ENCODE measurements at regions of chr7 and their contacts with region 1.

Region 1: DNA sequence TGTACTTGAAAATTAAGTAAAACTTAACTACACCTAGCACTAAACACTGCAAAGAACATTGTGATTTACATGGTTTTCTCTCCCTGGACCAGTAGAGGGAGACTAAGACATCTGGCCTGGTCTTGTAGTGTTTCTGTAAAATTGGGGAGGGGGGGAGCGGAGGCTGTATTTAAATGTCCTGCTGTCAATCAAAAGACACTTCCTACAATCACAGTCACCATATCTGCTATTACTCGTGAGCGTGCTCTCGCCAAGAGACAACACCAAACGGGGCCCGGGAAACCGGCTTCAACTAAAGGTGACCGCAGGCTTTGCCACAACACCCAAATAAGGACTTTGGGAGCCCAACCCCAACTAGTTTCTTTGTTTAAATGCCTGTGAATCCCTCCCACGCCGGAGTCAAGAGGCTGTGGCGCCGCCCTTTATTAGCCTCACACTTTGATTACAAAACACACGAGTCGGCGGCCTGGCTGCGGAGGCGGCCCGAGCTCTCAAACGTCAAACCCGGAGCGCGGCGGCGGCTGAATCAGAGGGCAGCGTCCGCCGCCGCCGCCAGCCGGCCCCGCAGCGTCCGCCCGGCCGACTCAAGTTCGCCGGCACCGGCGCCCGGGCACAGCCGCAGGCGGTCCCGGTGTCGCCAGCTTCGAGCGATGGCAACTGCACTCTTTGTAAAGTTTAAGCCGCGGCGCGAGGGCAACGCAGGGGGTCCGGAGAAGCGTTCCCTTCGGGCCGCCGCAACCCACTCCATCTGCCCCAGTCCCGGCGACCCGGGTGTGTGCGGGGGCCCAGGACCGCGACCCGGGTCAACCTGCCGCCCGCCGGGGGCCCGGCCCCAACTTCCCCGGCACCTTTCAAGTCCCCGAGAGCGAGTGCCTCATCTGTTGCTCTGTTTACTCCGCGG is 1.3 kb downstream of the KDM7A start:
- DNase-seq: peak; percentile 88
- H3K4me3 Mint-ChIP-seq: peak overlapping the region; percentile 83
- H3K27ac Mint-ChIP-seq: peak overlapping the region; percentile 69
- H3K4me1 Mint-ChIP-seq: peaks cover 56% of the 10 kb centered on the region
- H3K27me3 Mint-ChIP-seq: peaks cover 6% of the 10 kb centered on the region

Region 2: GRCh38 chr7:139340037-139340807 is 835.2 kb before region 1 on chr7:
- intact Hi-C with region 1: loop called (anchors 5 kb)
- DNase-seq: peak; percentile 97
- H3K4me3 Mint-ChIP-seq: peak overlapping the region; percentile 91
- H3K27ac Mint-ChIP-seq: peak overlapping the region; percentile 100
- H3K4me1 Mint-ChIP-seq: peaks cover 31% of the 10 kb centered on the region
- H3K27me3 Mint-ChIP-seq: peaks cover 8% of the 10 kb centered on the region

Region 3: GRCh38 chr7:139738101-139738489 is 437.4 kb before region 1 on chr7:
- intact Hi-C with region 1: no loop called
- DNase-seq: no peak
- H3K4me3 Mint-ChIP-seq: peak overlapping the region; percentile 11
- H3K27ac Mint-ChIP-seq: peak overlapping the region; percentile 73
- H3K4me1 Mint-ChIP-seq: peaks cover 40% of the 10 kb centered on the region
- H3K27me3 Mint-ChIP-seq: peaks cover 3% of the 10 kb centered on the region

Region 4: GRCh38 chr7:140062528-140063299 is 112.8 kb before region 1 on chr7 and contains the start of gene PARP12:
- intact Hi-C with region 1: loop called (anchors 1 kb)
- DNase-seq: peak; percentile 88
- H3K4me3 Mint-ChIP-seq: peak within 1 kb of the TSS; percentile 82
- H3K27ac Mint-ChIP-seq: peak within 1 kb of the TSS; percentile 91
- H3K4me1 Mint-ChIP-seq: peaks cover 43% of the 10 kb centered on the region
- H3K27me3 Mint-ChIP-seq: peaks cover 5% of the 10 kb centered on the region
- total RNA-seq, gene PARP12: 62.0 and 63.7 TPM in 2 replicates

Region 5: DNA sequence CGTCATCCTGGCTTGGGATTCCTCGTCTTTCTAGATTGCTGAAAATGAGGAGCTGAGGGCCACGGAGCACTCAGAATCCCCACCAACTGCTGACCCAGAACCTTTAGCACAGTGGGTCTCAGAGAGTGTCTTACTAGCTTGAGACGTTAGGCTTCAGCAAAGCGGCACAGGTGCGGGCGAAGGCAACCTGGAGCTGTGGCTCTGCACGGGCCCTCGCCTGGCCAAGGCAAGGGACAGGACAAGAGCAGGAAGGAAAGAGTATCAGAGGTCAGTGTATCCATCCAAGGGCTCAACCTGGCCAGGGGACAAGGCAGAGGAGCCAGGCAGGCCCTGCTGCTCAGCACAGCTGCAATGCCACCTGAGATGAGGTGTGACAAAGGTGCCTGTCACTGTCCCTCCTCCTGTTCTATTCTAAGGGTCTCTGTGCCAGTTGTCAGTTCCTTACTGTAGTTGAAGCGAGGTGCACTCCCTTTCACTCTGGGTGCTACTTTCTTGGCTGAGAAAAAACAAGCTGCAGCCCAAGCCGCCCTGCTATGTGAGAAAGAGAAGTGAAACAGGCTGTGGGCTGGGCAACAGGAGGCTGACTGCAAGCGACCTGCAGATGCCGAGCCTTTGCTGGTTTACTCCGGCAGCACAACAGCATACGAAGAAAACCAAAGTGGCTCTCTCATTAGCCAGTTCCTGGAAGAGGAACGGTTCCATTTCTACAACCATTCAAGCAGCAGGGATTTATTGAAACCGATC is 34.6 kb after region 1 on chr7:
- intact Hi-C with region 1: loop called (anchors 1 kb)
- DNase-seq: peak; percentile 64
- H3K4me3 Mint-ChIP-seq: peak overlapping the region; percentile 71
- H3K27ac Mint-ChIP-seq: peak overlapping the region; percentile 86
- H3K4me1 Mint-ChIP-seq: peaks cover 79% of the 10 kb centered on the region
- H3K27me3 Mint-ChIP-seq: no peaks in the 10 kb centered on the region

Region 6: GRCh38 chr7:140260352-140261104 is 85.1 kb after region 1 on chr7:
- intact Hi-C with region 1: loop called (anchors 1 kb)
- DNase-seq: no peak
- H3K4me3 Mint-ChIP-seq: no peak overlapping the region
- H3K27ac Mint-ChIP-seq: no peak overlapping the region
- H3K4me1 Mint-ChIP-seq: peaks cover 42% of the 10 kb centered on the region
- H3K27me3 Mint-ChIP-seq: no peaks in the 10 kb centered on the region

Region 7: DNA sequence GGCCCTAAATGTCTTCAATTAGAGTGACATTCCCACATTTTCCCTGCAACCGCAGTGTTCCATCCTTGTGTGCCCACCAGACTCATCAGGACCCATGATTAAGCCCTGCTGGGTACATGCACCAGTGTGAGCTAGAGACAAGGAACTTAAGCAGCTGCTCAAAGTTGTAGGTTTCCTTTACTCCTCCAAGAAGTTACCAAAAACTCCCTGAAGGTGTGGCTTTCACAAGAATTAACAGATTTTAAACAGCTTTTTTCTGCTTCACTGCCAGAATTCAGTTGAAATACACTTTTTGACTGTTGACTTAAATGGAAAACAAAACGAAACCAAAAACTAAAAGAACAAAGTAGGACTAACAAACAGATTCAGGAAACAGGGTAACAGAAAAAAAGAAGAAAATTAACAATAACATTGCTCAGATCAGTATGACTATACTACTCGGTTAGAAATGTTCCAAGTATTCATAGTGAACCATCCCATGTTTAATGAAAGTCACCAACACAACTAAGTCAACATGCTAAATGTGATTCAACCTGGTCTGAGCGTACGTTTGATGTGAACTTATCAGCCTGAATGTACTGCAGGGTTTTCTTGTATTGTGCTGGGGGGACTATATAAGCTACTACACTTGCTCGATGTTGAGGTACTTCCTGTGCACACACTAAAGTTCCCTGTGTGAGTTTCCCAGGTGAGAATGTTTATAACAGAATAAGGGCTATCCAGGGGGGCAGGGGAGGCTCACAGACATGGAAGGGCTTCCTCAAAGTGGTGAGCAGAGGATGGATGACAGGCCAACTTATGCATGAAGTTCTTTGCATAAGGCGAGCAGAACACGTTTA is 200.6 kb after region 1 on chr7:
- intact Hi-C with region 1: loop called (anchors 1 kb)
- DNase-seq: peak; percentile 47
- H3K4me3 Mint-ChIP-seq: peak overlapping the region; percentile 61
- H3K27ac Mint-ChIP-seq: peak overlapping the region; percentile 98
- H3K4me1 Mint-ChIP-seq: peaks cover 48% of the 10 kb centered on the region
- H3K27me3 Mint-ChIP-seq: no peaks in the 10 kb centered on the region

Region 8: DNA sequence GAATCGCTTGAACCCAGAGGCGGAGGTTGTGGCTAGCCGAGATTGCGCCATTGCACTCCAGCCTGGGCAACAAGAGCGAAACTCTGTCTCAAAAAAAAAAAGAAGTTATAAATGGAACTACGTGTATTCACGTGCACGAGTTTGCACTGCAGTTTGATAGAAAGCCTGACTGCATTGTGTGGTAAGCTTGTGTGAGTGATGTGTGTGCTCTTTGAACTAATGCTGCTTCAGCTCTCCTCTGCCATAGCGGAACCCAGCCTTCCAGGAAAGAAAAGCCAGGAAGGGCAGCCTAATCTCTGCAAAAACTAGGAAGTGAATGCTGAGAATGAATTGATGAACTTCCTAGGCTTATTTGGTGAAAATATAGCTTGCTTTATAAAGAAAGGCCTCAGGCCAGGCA is 319.4 kb after region 1 on chr7:
- intact Hi-C with region 1: loop called (anchors 1 kb)
- DNase-seq: no peak
- H3K4me3 Mint-ChIP-seq: no peak overlapping the region
- H3K27ac Mint-ChIP-seq: no peak overlapping the region
- H3K4me1 Mint-ChIP-seq: no peaks in the 10 kb centered on the region
- H3K27me3 Mint-ChIP-seq: peaks cover 7% of the 10 kb centered on the region